Common myeloid progenitor, CD34-positive (primary cell): ENCODE measurements at regions of chr3 and their contacts with region 1.

Region 1: GRCh38 chr3:169149349-169149890 is 514.1 kb downstream of the MECOM start:
- DNase-seq: peak; percentile 86 to 89 (median 89)
- H3K4me3 ChIP-seq: peak overlapping the region; percentile 19 to 88 (median 72)
- H3K27ac ChIP-seq: peak overlapping the region in 1 of 2 experiments; percentile 43
- H3K4me1 ChIP-seq: peaks cover 9 to 49% (median 30%) of the 10 kb centered on the region in 4 experiments
- H3K27me3 ChIP-seq: no peaks in the 10 kb centered on the region

Region 2: GRCh38 chr3:169138849-169139420 is 10.5 kb before region 1 on chr3:
- CTCF ChIA-PET with region 1: interaction called, 21 read pairs
- POLR2A ChIA-PET with region 1: interaction called, 5 read pairs
- DNase-seq: peak in 2 of 3 donors; percentile 39 to 63
- H3K4me3 ChIP-seq: peak overlapping the region in 5 of 7 experiments; percentile 25 to 66 (median 35)
- H3K27ac ChIP-seq: peak overlapping the region; percentile 29 to 76
- H3K4me1 ChIP-seq: peaks cover 8 to 61% (median 21%) of the 10 kb centered on the region in 4 experiments
- H3K27me3 ChIP-seq: no peaks in the 10 kb centered on the region

Region 3: DNA sequence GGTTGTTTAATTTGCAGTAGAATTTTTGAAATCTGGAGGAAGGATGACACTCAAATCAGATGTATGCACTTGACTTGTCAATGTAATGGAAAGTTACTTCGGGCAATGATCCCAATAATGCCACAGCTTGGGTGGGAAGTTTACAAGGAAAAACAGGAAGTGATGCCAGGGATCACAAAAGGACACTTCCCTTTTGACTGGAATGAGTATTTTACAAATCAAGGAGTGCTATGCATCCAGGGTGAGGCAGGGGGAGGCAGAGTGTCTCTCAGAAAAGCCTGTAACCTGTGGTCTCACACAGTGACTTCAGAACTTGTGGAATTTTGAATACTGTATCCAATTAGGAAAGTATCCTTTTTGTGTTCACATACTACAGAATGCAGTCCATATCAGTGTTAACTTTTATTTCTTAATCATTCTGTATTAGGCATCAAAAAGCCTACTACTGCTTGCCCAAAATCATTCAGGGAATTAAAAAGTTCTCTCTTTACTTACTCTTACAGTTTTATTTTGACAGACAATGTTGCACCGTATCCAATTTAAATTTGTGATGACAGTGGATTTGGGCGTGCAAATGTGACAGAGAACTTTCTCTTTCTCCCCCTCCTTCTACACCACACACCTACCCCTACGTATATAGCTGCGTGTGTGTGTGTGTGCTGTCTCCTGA is 69.0 kb after region 1 on chr3:
- CTCF ChIA-PET with region 1: interaction called, 11 read pairs
- POLR2A ChIA-PET with region 1: interaction called, 3 read pairs
- DNase-seq: peak; percentile 37 to 44 (median 37)
- H3K4me3 ChIP-seq: no peak overlapping the region
- H3K27ac ChIP-seq: no peak overlapping the region
- H3K4me1 ChIP-seq: peaks cover 0 to 10% (median 7%) of the 10 kb centered on the region in 4 experiments
- H3K27me3 ChIP-seq: no peaks in the 10 kb centered on the region

Region 4: GRCh38 chr3:169295126-169295525 is 145.7 kb after region 1 on chr3:
- CTCF ChIA-PET with region 1: interaction called, 13 read pairs
- POLR2A ChIA-PET with region 1: no interaction called
- DNase-seq: peak; percentile 43 to 73 (median 71)
- H3K4me3 ChIP-seq: no peak overlapping the region
- H3K27ac ChIP-seq: no peak overlapping the region
- H3K4me1 ChIP-seq: no peaks in the 10 kb centered on the region
- H3K27me3 ChIP-seq: no peaks in the 10 kb centered on the region

Region 5: GRCh38 chr3:169662132-169662842 is 512.9 kb after region 1 on chr3:
- CTCF ChIA-PET with region 1: interaction called, 11 read pairs
- POLR2A ChIA-PET with region 1: interaction called, 3 read pairs
- DNase-seq: peak; percentile 90 to 95 (median 92)
- H3K4me3 ChIP-seq: peak overlapping the region; percentile 50 to 92 (median 83)
- H3K27ac ChIP-seq: peak overlapping the region in 1 of 2 experiments; percentile 49
- H3K4me1 ChIP-seq: peaks cover 7 to 71% (median 45%) of the 10 kb centered on the region in 4 experiments
- H3K27me3 ChIP-seq: peaks cover 2 to 65% (median 25%) of the 10 kb centered on the region in 5 experiments

Region 6: GRCh38 chr3:169744366-169745054 is 595.1 kb after region 1 on chr3:
- CTCF ChIA-PET with region 1: interaction called, 15 read pairs
- POLR2A ChIA-PET with region 1: no interaction called
- DNase-seq: peak; percentile 53 to 74 (median 68)
- H3K4me3 ChIP-seq: no peak overlapping the region
- H3K27ac ChIP-seq: no peak overlapping the region
- H3K4me1 ChIP-seq: peaks cover 0 to 6% (median 2%) of the 10 kb centered on the region in 4 experiments
- H3K27me3 ChIP-seq: no peaks in the 10 kb centered on the region